Esophagus squamous epithelium (tissue), 5 donors: ENCODE measurements at regions of chr12 and their contacts with region 1.

Region 1: DNA sequence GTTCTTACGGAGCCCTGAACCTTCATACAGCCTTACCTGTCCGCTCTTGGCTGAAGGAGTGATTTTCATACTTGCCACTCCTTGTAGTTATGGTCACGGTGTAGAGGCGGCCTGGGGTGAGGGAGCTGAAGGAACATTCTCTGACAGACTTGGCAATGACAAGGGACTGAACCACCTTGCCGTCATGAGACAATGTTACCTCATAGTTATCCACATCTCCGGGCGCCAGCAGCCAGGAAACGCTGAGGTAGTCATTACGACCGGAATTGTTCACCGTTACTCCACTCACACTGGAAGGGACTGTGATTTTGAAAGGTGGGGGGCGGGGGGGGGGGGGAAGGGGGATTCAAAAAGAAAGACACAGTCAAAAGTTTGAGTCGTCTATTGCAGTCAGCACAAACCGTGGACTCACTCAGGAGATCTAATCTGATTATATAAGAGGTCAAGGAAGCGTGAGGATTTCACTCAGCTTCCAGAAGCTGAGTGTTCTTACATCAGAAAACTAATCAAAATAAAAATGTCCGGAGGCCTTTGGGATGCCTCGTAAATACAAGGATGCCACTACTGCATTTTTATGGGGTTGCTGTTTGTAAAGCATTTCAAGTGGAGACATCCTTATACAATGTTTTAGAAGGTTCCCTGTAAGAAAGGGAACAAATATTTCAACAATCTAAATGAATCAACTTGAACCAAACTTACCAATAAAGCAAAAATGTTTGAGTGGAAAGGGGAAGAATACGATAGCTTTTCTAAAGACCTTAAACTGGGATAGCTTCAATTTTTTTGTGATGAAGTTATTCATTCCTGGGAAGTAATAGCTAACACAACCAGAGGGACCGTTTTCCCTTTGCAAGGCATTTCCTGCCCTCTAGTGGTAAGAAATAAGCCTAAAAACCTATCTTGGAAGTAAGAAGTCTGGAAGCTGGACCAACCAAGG is 60.6 kb downstream of the PTPRB start:
- DNase-seq: no peak
- H3K4me3 ChIP-seq: no peak overlapping the region
- H3K27ac ChIP-seq: no peak overlapping the region
- H3K4me1 ChIP-seq: no peaks in the 10 kb centered on the region
- H3K27me3 ChIP-seq: no peaks in the 10 kb centered on the region
- CTCF ChIP-seq: peak; percentile 29 to 81 (median 73)
- POLR2A ChIP-seq: no peak

Region 2: GRCh38 chr12:69880571-69880970 is 696.0 kb before region 1 on chr12:
- intact Hi-C with region 1: loop called (anchors 2 kb)
- DNase-seq: no peak
- H3K4me3 ChIP-seq: no peak overlapping the region
- H3K27ac ChIP-seq: no peak overlapping the region
- H3K4me1 ChIP-seq: peaks cover 0 to 5% (median 0%) of the 10 kb centered on the region in 3 donors
- H3K27me3 ChIP-seq: peaks cover 0 to 16% (median 0%) of the 10 kb centered on the region in 4 donors
- CTCF ChIP-seq: no peak
- POLR2A ChIP-seq: no peak

Region 3: DNA sequence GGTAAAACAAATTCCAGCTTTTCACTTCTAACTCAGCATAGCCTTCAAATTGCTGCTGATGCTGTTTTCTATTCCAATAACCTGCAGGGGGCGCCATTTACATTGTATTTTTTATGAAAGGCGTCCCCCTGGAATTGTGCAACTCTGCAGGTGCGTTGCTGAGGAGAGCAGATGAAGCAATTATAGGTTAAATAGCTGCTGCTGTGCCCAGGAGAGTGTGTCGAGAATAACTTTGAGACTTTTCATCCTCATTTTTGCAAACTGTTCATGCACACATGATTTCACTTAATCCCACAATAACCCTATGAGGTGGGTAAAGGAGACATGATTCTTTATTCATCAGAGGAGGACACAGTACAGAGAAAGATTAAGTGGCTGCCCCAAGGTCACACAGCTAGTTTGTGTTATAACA is 675.9 kb before region 1 on chr12:
- intact Hi-C with region 1: loop called (anchors 5 kb)
- DNase-seq: peak; percentile 6
- H3K4me3 ChIP-seq: no peak overlapping the region
- H3K27ac ChIP-seq: no peak overlapping the region
- H3K4me1 ChIP-seq: peaks cover 0 to 6% (median 0%) of the 10 kb centered on the region in 3 donors
- H3K27me3 ChIP-seq: no peaks in the 10 kb centered on the region
- CTCF ChIP-seq: peak; percentile 80 to 88 (median 84)
- POLR2A ChIP-seq: no peak

Region 4: DNA sequence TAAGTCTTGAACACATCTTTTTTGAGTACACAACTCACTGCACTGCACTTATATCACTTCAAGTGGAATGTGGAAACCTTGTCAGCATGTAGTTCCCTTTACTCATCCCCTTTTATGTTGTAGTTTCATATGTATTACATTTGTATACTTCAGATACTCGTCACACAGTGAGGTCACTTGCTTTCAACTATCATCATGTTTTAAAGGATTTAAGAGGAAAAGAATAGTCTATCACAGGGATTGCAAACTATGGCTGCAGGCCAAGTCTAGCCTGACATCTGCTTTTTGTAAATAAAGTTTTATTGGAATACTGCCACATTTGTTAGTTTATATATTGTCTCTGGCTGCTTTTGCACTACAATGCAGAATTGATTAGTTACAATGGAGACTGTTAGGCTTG is 309.1 kb before region 1 on chr12:
- intact Hi-C with region 1: no loop called
- DNase-seq: no peak
- H3K4me3 ChIP-seq: no peak overlapping the region
- H3K27ac ChIP-seq: no peak overlapping the region
- H3K4me1 ChIP-seq: peaks cover 0 to 55% (median 4%) of the 10 kb centered on the region in 3 donors
- H3K27me3 ChIP-seq: no peaks in the 10 kb centered on the region
- CTCF ChIP-seq: no peak
- POLR2A ChIP-seq: no peak

Region 5: GRCh38 chr12:70436836-70437235 is 139.8 kb before region 1 on chr12:
- intact Hi-C with region 1: no loop called
- DNase-seq: no peak
- H3K4me3 ChIP-seq: no peak overlapping the region
- H3K27ac ChIP-seq: no peak overlapping the region
- H3K4me1 ChIP-seq: no peaks in the 10 kb centered on the region
- H3K27me3 ChIP-seq: no peaks in the 10 kb centered on the region
- CTCF ChIP-seq: no peak
- POLR2A ChIP-seq: no peak